Aorta (tissue), 5 donors: ENCODE measurements at regions of chr7 and their contacts with region 1.

Region 1: DNA sequence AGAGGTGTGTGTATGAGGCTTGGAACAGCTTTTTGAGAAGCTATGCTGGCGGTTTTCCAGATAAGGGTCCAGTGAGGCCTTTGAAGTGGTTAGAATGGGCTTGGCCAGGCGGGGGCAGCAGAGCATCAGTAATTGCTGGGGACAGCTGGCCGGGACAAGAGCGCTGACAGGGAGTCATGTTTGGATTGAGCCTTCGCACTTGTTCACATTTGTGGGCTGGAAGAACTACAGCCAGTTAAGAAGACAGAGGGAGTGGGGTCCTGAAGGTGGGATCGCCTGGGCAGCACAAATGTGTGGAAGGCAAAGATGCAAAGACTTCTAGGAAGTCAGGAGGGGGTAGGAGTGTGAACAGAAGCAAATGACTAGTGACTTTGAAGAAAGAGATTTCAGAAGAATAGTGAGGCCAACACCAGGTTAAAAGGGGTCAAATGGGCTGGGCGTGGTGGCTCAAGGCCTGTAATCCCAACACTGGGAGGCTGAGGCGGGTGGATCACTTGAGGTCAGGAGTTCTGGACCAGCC is 12.7 kb upstream of the SDHAF3 start:
- DNase-seq: peak; percentile 88 to 94
- ATAC-seq: no peak
- H3K4me3 ChIP-seq: no peak overlapping the region
- H3K27ac ChIP-seq: no peak overlapping the region
- H3K4me1 ChIP-seq: no peaks in the 10 kb centered on the region
- H3K27me3 ChIP-seq: no peaks in the 10 kb centered on the region

Region 2: GRCh38 chr7:97179454-97180104 is 74.8 kb after region 1 on chr7:
- intact Hi-C with region 1: loop called (anchors 2 to 5 kb)
- DNase-seq: peak in 1 of 2 donors; percentile 48
- ATAC-seq: no peak
- H3K4me3 ChIP-seq: no peak overlapping the region
- H3K27ac ChIP-seq: no peak overlapping the region
- H3K4me1 ChIP-seq: no peaks in the 10 kb centered on the region
- H3K27me3 ChIP-seq: no peaks in the 10 kb centered on the region

Region 3: GRCh38 chr7:97835296-97836138 is 730.7 kb after region 1 on chr7:
- intact Hi-C with region 1: loop called (anchors 2 to 5 kb)
- DNase-seq: peak in 1 of 2 donors; percentile 70
- ATAC-seq: no peak
- H3K4me3 ChIP-seq: no peak overlapping the region
- H3K27ac ChIP-seq: no peak overlapping the region
- H3K4me1 ChIP-seq: no peaks in the 10 kb centered on the region
- H3K27me3 ChIP-seq: peaks cover 0 to 3% of the 10 kb centered on the region in 2 donors